K562 (cell line): ENCODE measurements at regions of chr17 and their contacts with region 1.

Region 1: GRCh38 chr17:2672026-2672425 is 39.5 kb downstream of the CLUH start:
- DNase-seq: no peak
- ATAC-seq: no peak
- H3K4me3 ChIP-seq: no peak overlapping the region
- H3K27ac ChIP-seq: no peak overlapping the region
- H3K4me1 ChIP-seq: no peaks in the 10 kb centered on the region
- H3K27me3 ChIP-seq: no peaks in the 10 kb centered on the region
- CTCF ChIP-seq: no peak
- EP300 ChIP-seq: no peak
- POLR2A ChIP-seq: no peak
- RAD21 ChIP-seq: no peak

Region 2: GRCh38 chr17:2253768-2254406 is 418.1 kb before region 1 on chr17:
- CTCF ChIA-PET with region 1: no interaction called
- POLR2A ChIA-PET with region 1: no interaction called
- in situ Hi-C with region 1: no loop called
- intact Hi-C with region 1: no loop called
- DNase-seq: no peak
- ATAC-seq: no peak
- H3K4me3 ChIP-seq: no peak overlapping the region
- H3K27ac ChIP-seq: no peak overlapping the region
- H3K4me1 ChIP-seq: no peaks in the 10 kb centered on the region; a peak in 1 of 5 replicates
- H3K27me3 ChIP-seq: no peaks in the 10 kb centered on the region
- CTCF ChIP-seq: no peak
- EP300 ChIP-seq: no peak
- POLR2A ChIP-seq: no peak
- RAD21 ChIP-seq: no peak

Region 3: DNA sequence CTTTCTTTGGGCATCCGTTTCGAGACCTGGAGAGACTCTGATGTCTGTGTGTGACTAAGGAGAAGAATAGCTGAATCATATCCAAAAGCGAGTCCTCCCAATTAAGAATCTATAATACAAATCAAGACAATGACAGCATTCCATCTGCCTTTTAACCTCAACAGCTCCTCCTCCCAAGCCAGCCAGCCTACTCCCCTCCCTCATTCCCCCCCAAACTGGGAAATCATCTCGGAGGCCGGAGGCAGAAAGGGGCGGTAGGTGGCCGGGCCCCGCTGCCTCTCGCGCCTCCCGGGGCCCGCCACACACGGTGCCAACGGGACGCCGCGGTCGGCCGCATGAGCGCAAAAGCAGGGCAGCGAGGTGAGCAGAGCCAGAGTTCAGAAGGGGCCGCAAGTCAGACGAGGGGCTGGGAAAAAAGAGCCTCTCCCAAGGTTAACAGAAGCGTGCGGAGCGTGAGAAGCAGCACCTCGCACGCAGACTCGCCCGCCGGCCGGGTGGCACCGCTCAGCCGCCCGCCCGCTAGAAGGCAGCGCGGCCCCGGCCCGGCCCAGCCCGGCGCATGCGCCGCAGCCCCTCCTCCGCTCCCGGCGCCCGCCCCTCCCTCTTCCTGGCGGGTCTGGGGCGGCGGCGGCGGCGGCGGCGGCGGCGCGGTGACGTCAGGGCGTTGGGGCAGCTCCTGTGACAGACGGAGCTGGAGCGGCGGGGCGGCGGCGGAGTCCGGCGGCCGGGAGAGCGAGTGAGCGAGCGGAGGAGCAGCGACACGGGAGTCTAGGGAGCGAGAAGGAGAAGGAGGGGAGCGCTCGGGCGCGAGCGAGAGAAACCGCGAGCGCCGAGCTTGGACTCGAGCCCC is 78.8 kb before region 1 on chr17 and contains the start of gene PAFAH1B1:
- CTCF ChIA-PET with region 1: no interaction called
- POLR2A ChIA-PET with region 1: no interaction called
- in situ Hi-C with region 1: no loop called
- intact Hi-C with region 1: loop called (anchors 10 kb)
- DNase-seq: peak; percentile 91 to 96 (median 94)
- ATAC-seq: peak; percentile 84
- H3K4me3 ChIP-seq: peak within 1 kb of the TSS; percentile 96
- H3K27ac ChIP-seq: peak within 1 kb of the TSS; percentile 92
- H3K4me1 ChIP-seq: peaks cover 5 to 12% of the 10 kb centered on the region in 2 experiments; a peak in 4 of 5 replicates
- H3K27me3 ChIP-seq: no peaks in the 10 kb centered on the region
- CTCF ChIP-seq: 0 out of 6 replicates have a peak, but pooled peaks of 1 of the 3 experiments have one; percentile 4
- EP300 ChIP-seq: no peak
- POLR2A ChIP-seq: peak; percentile 76
- RAD21 ChIP-seq: no peak; a peak in 1 of 4 replicates
- polyA plus RNA-seq, gene PAFAH1B1: 32.1 to 37.3 TPM